ENCODE measurements at regions of chr1 and their contacts with region 1.

Region 1: DNA sequence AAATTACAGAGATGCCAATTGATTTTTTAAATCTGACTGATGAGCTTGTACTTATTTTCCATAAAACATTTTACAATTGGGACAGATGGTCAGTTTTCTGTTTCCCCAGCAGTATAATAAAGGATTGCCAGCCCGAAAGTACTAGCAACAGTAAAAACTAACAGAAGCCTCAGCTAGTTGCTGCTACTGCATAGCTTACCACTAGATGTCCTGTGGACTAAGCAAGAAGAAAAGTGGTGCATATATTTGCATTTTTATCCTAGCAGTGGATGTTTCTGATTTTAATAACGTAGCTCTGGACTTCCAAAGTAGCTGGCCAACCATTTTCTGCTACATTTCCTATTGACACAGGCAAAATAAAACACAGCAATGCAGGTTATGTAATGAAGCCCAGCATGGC is 241.5 kb downstream of the BARHL2 start:
- DNase-seq: no peak
- CTCF ChIP-seq: no peak

Region 2: GRCh38 chr1:90459570-90459969 is 16.1 kb before region 1 on chr1:
- CTCF ChIA-PET with region 1: interaction called, 14 read pairs
- POLR2A ChIA-PET with region 1: no interaction called
- DNase-seq: no peak
- CTCF ChIP-seq: no peak

Region 3: GRCh38 chr1:90486134-90486824 is 10.6 kb after region 1 on chr1:
- CTCF ChIA-PET with region 1: interaction called, 10 read pairs
- POLR2A ChIA-PET with region 1: no interaction called
- DNase-seq: no peak
- CTCF ChIP-seq: no peak